ENCODE measurements at regions of chr3 and their contacts with region 1.

Region 1: GRCh38 chr3:52897130-52898122 is at the start of gene STIMATE:
- DNase-seq: peak; percentile 91
- ATAC-seq: peak; percentile 82
- H3K4me3 Mint-ChIP-seq: peak within 1 kb of the TSS; percentile 81
- H3K27ac Mint-ChIP-seq: peak within 1 kb of the TSS; percentile 48
- H3K4me1 Mint-ChIP-seq: peaks cover 49% of the 10 kb centered on the region
- H3K27me3 Mint-ChIP-seq: no peaks in the 10 kb centered on the region
- total RNA-seq, gene STIMATE: 12.0 to 17.1 TPM

Region 2: GRCh38 chr3:52685709-52686691 is 211.4 kb before region 1 on chr3 and contains the starts of genes GNL3 and PBRM1:
- CTCF ChIA-PET with region 1: interaction called, 4 read pairs
- POLR2A ChIA-PET with region 1: no interaction called
- intact Hi-C with region 1: loop called in 1 of 2 experiments (anchors 5 kb)
- DNase-seq: peak; percentile 97
- ATAC-seq: peak; percentile 70
- H3K4me3 Mint-ChIP-seq: peak within 1 kb of the TSS; percentile 99
- H3K27ac Mint-ChIP-seq: peak within 1 kb of the TSS; percentile 99
- H3K4me1 Mint-ChIP-seq: peaks cover 75% of the 10 kb centered on the region
- H3K27me3 Mint-ChIP-seq: no peaks in the 10 kb centered on the region
- total RNA-seq, gene GNL3: 206 to 218 TPM
- total RNA-seq, gene PBRM1: 57.6 to 59.8 TPM

Region 3: GRCh38 chr3:52845691-52846431 is 51.6 kb before region 1 on chr3:
- CTCF ChIA-PET with region 1: interaction called, 5 read pairs
- POLR2A ChIA-PET with region 1: interaction called, 3 read pairs
- intact Hi-C with region 1: loop called (anchors 2 to 5 kb)
- DNase-seq: peak; percentile 50
- ATAC-seq: no peak
- H3K4me3 Mint-ChIP-seq: no peak overlapping the region
- H3K27ac Mint-ChIP-seq: no peak overlapping the region
- H3K4me1 Mint-ChIP-seq: peaks cover 7% of the 10 kb centered on the region
- H3K27me3 Mint-ChIP-seq: no peaks in the 10 kb centered on the region

Region 4: GRCh38 chr3:52920841-52921240 is 23.4 kb after region 1 on chr3:
- CTCF ChIA-PET with region 1: no interaction called
- POLR2A ChIA-PET with region 1: no interaction called
- intact Hi-C with region 1: no loop called
- DNase-seq: no peak
- ATAC-seq: no peak
- H3K4me3 Mint-ChIP-seq: no peak overlapping the region
- H3K27ac Mint-ChIP-seq: no peak overlapping the region
- H3K4me1 Mint-ChIP-seq: peaks cover 2% of the 10 kb centered on the region
- H3K27me3 Mint-ChIP-seq: no peaks in the 10 kb centered on the region

Region 5: DNA sequence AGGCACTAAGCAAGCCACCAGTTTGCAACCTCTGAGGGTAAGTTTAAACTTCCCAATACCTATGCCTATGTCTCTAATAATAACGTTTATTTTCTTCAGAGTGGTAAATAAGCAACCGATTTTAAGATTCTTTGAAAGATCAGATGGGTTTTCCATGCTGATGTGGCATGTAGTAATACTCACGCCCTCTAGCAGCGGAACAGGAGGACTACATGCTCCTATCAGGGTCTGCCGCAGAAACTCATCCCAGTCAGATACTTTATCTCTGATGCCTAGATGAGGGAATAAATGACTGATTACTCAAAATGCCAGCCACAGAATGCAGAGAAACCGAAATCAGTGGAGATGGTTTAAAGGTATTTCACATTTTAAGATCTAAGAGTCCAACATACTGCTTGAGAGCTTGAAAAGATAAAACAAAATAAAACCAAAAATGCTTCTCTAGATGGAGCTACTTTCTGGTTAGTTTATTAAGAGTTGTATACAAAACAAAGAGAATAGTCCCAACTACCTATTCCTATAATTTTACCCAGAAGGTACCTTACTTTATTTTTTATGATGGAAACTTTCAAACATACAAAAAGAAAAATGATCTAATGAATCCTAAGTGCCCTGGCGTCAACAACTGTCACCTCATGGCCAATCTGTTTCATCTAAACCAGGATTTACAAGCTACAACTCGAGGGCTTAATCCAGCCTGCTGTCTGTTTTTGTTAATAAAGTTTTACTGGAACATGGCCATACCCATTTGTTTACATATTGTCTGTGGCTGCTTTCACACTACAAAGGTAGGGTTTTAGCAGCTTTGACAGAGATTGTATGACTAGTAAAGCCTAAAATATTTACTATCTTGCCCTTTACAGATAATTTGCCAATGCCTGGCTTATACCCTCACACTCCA is 37.5 kb after region 1 on chr3:
- CTCF ChIA-PET with region 1: interaction called, 6 read pairs
- POLR2A ChIA-PET with region 1: no interaction called
- intact Hi-C with region 1: loop called (anchors 2 kb)
- DNase-seq: peak; percentile 75
- ATAC-seq: peak; percentile 99
- H3K4me3 Mint-ChIP-seq: no peak overlapping the region
- H3K27ac Mint-ChIP-seq: no peak overlapping the region
- H3K4me1 Mint-ChIP-seq: peaks cover 12% of the 10 kb centered on the region
- H3K27me3 Mint-ChIP-seq: no peaks in the 10 kb centered on the region

Region 6: GRCh38 chr3:53072653-53073552 is 175.5 kb after region 1 on chr3:
- CTCF ChIA-PET with region 1: interaction called, 4 read pairs
- POLR2A ChIA-PET with region 1: no interaction called
- intact Hi-C with region 1: loop called in 1 of 2 experiments (anchors 2 kb)
- DNase-seq: peak; percentile 95
- ATAC-seq: peak; percentile 94
- H3K4me3 Mint-ChIP-seq: peak overlapping the region; percentile 81
- H3K27ac Mint-ChIP-seq: peak overlapping the region; percentile 97
- H3K4me1 Mint-ChIP-seq: peaks cover 18% of the 10 kb centered on the region
- H3K27me3 Mint-ChIP-seq: no peaks in the 10 kb centered on the region

Region 7: GRCh38 chr3:53347261-53348064 is 450.0 kb after region 1 on chr3 and contains the start of gene DCP1A:
- CTCF ChIA-PET with region 1: no interaction called
- POLR2A ChIA-PET with region 1: no interaction called
- intact Hi-C with region 1: loop called in 1 of 2 experiments (anchors 5 kb)
- DNase-seq: peak; percentile 97
- ATAC-seq: peak; percentile 98
- H3K4me3 Mint-ChIP-seq: peak within 1 kb of the TSS; percentile 93
- H3K27ac Mint-ChIP-seq: peak within 1 kb of the TSS; percentile 99
- H3K4me1 Mint-ChIP-seq: peaks cover 21% of the 10 kb centered on the region
- H3K27me3 Mint-ChIP-seq: no peaks in the 10 kb centered on the region
- total RNA-seq, gene DCP1A: 33.4 to 41.9 TPM